Cardiac septum (tissue), 1 donor: ENCODE measurements at regions of chr10 and their contacts with region 1.

Region 1: DNA sequence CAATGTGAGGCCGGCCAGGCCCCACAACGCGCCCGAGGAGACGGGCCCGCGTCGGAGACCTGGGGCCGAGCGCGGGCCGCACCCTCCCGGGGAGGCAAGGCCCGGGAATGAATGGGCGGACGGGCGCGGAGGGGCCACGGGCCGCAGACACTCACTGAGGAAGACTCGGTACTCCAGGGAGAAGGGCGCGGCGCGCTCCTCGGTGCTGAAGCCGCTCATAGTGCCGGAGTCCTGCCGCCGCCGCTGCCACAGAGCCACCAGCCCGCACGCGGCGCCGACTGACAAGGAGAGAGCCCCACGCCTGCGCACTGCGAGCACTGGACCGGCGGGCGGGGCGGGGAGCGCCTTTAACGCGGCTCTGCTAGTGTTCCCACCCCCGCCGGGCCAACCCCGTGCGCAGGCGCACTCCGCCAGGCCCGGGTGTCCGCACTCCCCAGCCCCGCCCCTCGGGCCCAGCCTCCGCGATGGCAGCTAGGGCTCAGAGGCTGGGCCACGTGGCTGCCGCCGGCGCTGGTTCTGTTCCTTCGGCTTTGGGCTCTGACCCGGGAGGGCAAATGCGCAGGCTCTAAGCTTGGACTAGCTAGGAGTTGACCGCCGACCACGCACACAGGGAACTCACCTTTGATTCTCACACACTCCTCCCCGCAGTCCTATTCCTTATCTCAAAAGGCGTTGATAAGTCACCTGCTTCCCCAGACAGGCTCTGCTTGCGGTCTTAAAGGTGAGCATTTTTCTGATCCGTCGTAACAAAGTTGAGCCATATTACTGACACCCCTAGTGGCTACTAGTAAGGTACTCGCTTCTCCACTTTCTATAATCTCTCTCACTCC is at the start of gene PPA1:
- DNase-seq: peak; percentile 99
- total RNA-seq, gene PPA1: 68.6 TPM

Region 2: DNA sequence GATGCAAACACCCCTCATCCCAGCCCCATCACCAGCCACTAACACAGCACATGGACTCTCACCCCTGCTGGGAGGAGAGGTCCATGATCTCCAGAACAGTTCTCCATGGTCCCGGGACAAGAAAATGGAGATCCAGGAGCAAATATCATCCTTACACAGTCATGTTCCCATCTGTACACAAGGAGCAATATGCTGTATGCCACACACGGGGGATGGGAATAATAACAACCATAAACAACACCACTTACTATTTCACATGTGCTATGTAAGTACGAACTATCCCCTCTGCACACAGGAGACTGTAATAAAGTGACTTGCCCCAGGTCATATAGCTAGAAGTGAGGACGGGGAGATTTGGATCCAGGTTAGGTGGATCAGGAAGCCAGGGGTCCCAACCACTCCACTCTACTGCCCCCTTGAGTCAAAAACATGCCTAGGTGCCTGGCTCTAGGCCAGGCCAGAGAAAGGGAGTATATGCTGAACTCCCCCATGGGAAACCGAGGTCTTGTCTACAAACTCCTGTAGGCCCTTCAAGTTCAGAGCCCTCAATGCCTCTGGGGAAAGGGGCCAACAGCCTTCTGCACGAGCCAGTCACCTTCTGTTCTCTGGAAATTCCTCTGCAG is 115.0 kb after region 1 on chr10:
- intact Hi-C with region 1: loop called (anchors 5 kb)
- DNase-seq: no peak

Region 3: DNA sequence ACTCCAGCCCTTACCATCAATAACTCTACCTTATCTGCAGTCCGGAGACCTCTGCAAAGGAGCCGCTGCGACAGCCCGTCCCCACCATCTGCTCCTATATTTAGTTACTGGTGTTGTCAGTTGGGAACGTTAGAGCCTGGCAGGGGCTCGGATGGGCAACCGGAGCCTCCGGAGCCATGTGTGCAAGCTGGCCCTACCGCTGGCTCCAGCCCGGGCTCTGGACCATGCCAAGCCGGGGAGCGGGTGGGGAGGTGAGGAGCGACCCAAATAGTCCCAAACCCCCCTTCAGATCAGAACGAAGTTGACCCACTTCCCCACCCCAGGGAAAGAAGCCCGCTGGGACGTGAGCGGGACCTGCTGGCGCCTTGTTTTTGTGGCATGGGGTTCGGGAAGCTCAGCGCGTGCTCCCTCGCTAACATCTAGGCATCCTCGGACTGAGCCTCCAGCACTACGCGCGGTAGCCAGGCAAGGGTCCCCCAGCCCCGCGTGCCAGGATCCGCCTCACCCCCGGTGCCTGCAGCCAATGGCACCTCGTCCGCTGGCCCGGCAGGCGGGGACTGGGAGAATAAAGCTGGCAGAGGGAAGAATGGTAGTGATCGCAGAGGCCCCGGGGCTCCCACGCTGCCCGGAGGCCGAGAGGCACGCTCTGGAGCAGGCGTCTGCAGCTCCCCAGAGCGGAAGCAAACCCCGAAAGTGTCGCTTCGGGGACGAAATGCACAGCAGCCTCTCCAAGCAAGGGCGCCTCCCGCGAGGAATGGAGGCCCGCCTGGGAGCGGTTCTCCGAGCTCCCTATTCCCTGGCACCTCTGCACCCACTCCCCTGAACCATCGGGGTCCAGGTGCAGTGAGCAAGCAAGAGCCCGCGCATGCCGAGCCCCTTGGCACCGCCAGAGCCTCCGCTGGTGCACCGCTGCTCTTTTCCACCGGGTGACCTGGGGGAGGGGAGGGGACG is 148.4 kb after region 1 on chr10:
- intact Hi-C with region 1: loop called (anchors 5 kb)
- DNase-seq: peak; percentile 77